ENCODE measurements at regions of chr1 and their contacts with region 1.

Region 1: GRCh38 chr1:225977937-225978748 is 21.0 kb downstream of the SDE2 start:
- DNase-seq: peak; percentile 25 to 65
- ATAC-seq: peak; percentile 81 to 89 (median 83)
- H3K4me3 ChIP-seq: no peak overlapping the region
- H3K4me3 Mint-ChIP-seq: peak overlapping the region; percentile 56
- H3K27ac ChIP-seq: peak overlapping the region; percentile 41
- H3K27ac Mint-ChIP-seq: peak overlapping the region; percentile 47 to 66
- H3K4me1 ChIP-seq: peaks cover 22% of the 10 kb centered on the region
- H3K4me1 Mint-ChIP-seq: peaks cover 16 to 17% of the 10 kb centered on the region in 2 donors
- H3K27me3 ChIP-seq: no peaks in the 10 kb centered on the region
- H3K27me3 Mint-ChIP-seq: no peaks in the 10 kb centered on the region
- CTCF ChIP-seq: no peak

Region 2: GRCh38 chr1:225318706-225319575 is 659.2 kb before region 1 on chr1:
- intact Hi-C with region 1: loop called (anchors 1 kb)
- DNase-seq: peak in 1 of 2 donors; percentile 61
- ATAC-seq: peak; percentile 57 to 72 (median 61)
- H3K4me3 ChIP-seq: no peak overlapping the region
- H3K4me3 Mint-ChIP-seq: no peak overlapping the region
- H3K27ac ChIP-seq: no peak overlapping the region
- H3K27ac Mint-ChIP-seq: no peak overlapping the region
- H3K4me1 ChIP-seq: no peaks in the 10 kb centered on the region
- H3K4me1 Mint-ChIP-seq: peaks cover 0 to 5% of the 10 kb centered on the region in 2 donors
- H3K27me3 ChIP-seq: no peaks in the 10 kb centered on the region
- H3K27me3 Mint-ChIP-seq: peaks cover 5 to 20% of the 10 kb centered on the region in 2 donors
- CTCF ChIP-seq: peak; percentile 64

Region 3: DNA sequence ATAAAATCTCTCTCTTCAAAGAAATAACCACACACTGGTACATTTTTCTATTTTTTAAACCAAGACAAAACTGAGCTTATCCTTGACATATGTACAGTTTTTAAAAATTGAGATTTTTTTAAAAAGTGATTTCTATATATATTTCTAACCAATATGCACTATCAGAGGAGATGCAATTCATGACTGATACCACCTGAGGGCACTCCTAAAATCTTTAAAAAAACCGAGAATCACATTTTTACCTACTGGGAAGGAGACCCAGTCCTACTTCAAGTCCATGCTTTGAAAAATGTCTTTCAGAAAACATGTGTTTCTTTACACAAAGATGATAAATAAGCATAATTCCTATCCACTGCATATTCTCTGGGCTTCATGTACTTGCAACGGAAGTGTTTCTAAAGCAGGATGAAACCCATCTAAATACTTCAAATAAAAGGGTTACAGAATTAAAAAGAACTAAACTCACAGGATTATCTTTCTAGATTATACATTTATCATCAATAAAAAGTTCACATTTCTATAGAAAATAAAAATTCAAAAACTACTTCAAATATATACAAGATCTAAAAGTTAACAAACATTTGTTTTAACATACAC is 423.8 kb before region 1 on chr1:
- intact Hi-C with region 1: loop called (anchors 10 kb)
- DNase-seq: peak in 1 of 2 donors; percentile 49
- ATAC-seq: peak in 1 of 3 donors; percentile 42
- H3K4me3 ChIP-seq: no peak overlapping the region
- H3K4me3 Mint-ChIP-seq: no peak overlapping the region
- H3K27ac ChIP-seq: no peak overlapping the region
- H3K27ac Mint-ChIP-seq: no peak overlapping the region
- H3K4me1 ChIP-seq: no peaks in the 10 kb centered on the region
- H3K4me1 Mint-ChIP-seq: no peaks in the 10 kb centered on the region
- H3K27me3 ChIP-seq: no peaks in the 10 kb centered on the region
- H3K27me3 Mint-ChIP-seq: peaks cover 3 to 20% of the 10 kb centered on the region in 2 donors
- CTCF ChIP-seq: peak; percentile 32

Region 4: DNA sequence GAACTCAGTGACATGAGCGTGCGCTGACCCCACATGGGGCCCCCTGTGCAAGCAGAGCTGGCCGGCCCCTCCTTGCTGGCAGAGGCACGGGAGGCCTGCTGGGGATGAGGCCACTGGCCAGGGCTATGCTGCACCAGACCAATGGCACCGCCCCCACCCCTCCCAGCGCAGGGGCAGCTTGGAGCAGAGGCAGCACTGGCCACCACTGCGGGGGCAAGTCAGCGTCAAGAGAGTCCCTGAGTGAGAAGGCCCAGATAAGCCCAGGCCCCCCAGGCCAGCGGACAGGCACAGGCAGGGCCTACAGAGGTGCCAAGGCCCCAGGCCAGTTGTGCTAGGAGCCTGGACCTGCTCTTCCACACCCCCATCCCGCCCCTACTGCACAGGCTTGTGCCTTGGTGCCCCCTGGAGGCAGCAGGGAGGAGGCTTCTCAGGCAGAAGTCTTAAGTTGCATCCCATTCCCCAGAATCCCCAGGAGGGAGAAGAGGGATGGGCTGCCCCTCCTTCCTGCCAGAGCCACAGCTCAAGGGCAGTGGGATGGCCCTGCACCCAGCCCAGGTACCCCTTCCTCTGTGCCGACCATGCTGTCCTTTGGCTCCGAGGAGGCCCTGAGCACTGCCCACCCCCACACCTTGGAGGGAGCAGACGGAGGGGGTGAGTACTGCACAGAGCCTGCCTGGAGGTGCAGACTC is 132.4 kb before region 1 on chr1:
- intact Hi-C with region 1: loop called (anchors 10 kb)
- DNase-seq: peak in 1 of 2 donors; percentile 59
- ATAC-seq: no peak
- H3K4me3 ChIP-seq: no peak overlapping the region
- H3K4me3 Mint-ChIP-seq: no peak overlapping the region
- H3K27ac ChIP-seq: no peak overlapping the region
- H3K27ac Mint-ChIP-seq: peak overlapping the region in 1 of 2 donors; percentile 95
- H3K4me1 ChIP-seq: peaks cover 49% of the 10 kb centered on the region
- H3K4me1 Mint-ChIP-seq: peaks cover 28 to 51% of the 10 kb centered on the region in 2 donors
- H3K27me3 ChIP-seq: no peaks in the 10 kb centered on the region
- H3K27me3 Mint-ChIP-seq: no peaks in the 10 kb centered on the region
- CTCF ChIP-seq: no peak

Region 5: DNA sequence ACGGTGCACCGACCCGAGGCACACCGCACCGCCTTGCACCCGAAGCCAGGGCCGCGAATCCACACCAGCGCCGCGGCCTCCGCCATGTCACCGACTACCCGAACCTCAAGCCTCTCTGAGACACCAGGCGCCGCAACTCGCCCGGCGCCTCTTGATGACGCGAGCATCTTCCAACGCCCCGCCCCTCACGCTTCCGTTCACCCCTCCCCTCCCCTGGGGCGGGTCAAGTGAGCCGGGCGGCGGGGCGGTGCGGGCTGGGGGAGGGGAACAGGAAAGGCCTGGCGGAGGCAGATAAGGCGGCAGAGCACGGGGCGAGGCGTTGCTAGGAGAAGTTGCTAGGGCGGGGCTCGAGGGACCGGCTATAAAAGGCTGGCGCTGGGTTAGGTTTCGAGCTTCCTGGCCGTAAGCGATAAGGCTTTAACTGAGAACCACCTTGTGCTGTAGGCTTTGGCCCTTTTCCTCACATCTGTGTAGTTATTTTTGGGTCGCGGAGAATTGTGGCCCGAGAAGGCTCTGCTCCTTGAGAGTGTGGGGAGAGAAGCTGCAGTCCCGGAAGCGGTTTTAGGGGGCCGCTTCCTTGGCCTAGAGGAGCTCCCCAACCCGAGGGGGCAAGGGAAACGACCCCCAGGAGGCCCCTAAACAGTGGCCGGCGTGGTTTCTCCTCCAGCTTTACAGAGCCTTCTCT is 21.2 kb after region 1 on chr1 and contains the start of gene SDE2:
- intact Hi-C with region 1: loop called (anchors 2 kb)
- DNase-seq: peak; percentile 99
- ATAC-seq: peak; percentile 83 to 97 (median 87)
- H3K4me3 ChIP-seq: peak within 1 kb of the TSS; percentile 81
- H3K4me3 Mint-ChIP-seq: peak within 1 kb of the TSS; percentile 100
- H3K27ac ChIP-seq: peak within 1 kb of the TSS; percentile 99
- H3K27ac Mint-ChIP-seq: peak within 1 kb of the TSS; percentile 96 to 100
- H3K4me1 ChIP-seq: peaks cover 48% of the 10 kb centered on the region
- H3K4me1 Mint-ChIP-seq: peaks cover 63 to 64% of the 10 kb centered on the region in 2 donors
- H3K27me3 ChIP-seq: no peaks in the 10 kb centered on the region
- H3K27me3 Mint-ChIP-seq: no peaks in the 10 kb centered on the region
- CTCF ChIP-seq: no peak
- total RNA-seq, gene SDE2: 52.5 to 62.7 (median 53.6) TPM

Measured in natural killer cell (primary cell).